Activated naive CD4-positive, alpha-beta T cell treated with anti-CD3 and anti-CD28 coated beads for 36 hours (primary cell): ENCODE measurements at regions of chr2 and their contacts with region 1.

Region 1: DNA sequence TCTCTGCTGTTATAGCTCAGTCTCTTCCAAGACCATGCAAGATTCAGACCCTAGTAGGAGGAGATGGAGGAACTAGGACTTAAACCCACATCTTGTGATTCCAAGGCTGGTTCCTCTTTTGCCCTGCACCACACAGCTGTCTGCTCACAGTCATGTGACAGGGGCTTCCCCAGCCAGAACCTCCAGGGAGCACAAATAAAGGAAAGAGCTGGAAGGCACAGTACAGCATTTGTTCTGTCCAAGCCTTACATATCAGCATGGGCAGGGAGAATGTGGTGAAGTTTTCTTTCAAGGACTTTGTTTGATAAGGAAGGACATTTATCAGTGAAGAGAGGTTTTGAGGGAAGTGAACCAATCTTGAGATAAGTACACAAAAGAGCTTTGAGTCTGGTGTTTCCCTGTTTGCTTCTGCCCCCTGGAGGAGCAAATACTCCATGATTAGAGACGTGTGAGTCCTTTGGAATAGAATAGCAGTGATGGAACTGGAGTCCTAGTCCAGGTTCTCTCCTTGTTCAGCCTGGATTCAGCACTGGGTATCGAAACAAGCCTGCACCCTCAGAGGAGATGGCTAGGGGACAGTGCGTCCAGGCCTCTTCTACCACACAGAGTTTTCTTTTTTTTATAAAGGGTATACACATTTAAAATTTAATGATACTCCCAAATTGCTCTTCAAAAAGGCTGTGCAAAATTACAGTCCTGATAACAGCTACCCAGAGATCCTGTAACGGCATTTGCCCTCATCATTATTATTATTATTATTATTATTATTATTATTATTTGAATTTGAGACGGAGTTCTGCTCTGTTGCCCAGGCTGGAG is 24.6 kb upstream of the CASP10 start:
- DNase-seq: peak; percentile 76
- H3K4me3 Mint-ChIP-seq: no peak overlapping the region
- H3K27ac Mint-ChIP-seq: peak overlapping the region; percentile 86
- H3K4me1 Mint-ChIP-seq: peaks cover 24% of the 10 kb centered on the region
- H3K27me3 Mint-ChIP-seq: no peaks in the 10 kb centered on the region

Region 2: GRCh38 chr2:201130524-201131186 is 27.7 kb before region 1 on chr2:
- CTCF ChIA-PET with region 1: interaction called, 12 read pairs
- intact Hi-C with region 1: loop called (anchors 1 kb)
- DNase-seq: peak; percentile 68
- H3K4me3 Mint-ChIP-seq: peak overlapping the region; percentile 76
- H3K27ac Mint-ChIP-seq: peak overlapping the region; percentile 96
- H3K4me1 Mint-ChIP-seq: peaks cover 56% of the 10 kb centered on the region
- H3K27me3 Mint-ChIP-seq: no peaks in the 10 kb centered on the region

Region 3: DNA sequence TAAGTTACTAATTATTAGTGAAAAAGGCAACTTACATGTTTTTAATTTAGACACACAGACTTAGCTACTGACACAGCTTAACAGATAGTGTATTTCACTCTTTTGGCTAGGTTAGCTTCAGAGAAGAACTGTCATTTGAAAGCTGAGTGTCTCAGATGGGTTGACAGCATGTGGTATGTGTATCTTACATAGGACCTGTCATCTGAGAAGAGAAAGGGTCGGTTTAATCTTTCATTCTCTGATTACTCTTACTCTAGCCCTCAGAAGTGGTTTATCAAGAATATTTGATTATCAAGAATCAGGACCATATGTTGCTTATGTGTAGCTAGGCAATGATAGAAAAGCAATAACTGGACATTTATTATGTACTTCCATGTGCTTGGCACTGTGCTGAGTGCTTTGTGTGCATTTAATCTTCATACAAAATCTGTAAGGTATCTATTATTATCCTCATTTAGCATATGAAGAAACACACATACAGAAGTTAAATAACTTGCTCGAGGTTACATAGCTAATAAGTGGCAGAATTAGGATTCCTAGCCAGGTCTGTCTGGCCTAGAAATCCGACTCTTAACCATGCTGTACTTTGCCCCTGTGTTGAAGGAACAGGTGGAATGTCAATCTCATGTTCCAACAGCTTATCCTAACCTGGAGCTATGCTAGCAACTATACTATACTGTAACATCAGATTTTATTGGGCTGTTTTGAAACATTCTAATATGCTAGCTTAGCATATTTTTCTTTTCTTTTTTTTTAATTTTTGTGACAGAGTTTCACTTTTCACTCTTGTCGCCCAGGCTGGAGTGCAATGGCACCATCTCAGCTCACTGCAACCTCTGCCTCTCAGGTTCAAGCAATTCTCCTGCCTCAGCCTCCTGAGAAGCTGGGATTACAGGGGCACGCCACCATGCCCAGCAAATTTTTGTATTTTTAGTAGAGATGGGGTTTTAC is 13.9 kb before region 1 on chr2:
- CTCF ChIA-PET with region 1: interaction called, 15 read pairs
- intact Hi-C with region 1: no loop called
- DNase-seq: no peak
- H3K4me3 Mint-ChIP-seq: no peak overlapping the region
- H3K27ac Mint-ChIP-seq: no peak overlapping the region
- H3K4me1 Mint-ChIP-seq: peaks cover 20% of the 10 kb centered on the region
- H3K27me3 Mint-ChIP-seq: no peaks in the 10 kb centered on the region

Region 4: GRCh38 chr2:201458381-201458780 is 300.1 kb after region 1 on chr2:
- CTCF ChIA-PET with region 1: no interaction called
- intact Hi-C with region 1: no loop called
- DNase-seq: no peak
- H3K4me3 Mint-ChIP-seq: no peak overlapping the region
- H3K27ac Mint-ChIP-seq: no peak overlapping the region
- H3K4me1 Mint-ChIP-seq: peaks cover 1% of the 10 kb centered on the region
- H3K27me3 Mint-ChIP-seq: no peaks in the 10 kb centered on the region